ENCODE measurements at regions of chr2 and their contacts with region 1.

Region 1: GRCh38 chr2:96527286-96528005 is 9.1 kb upstream of the ARID5A start:
- DNase-seq: peak; percentile 59
- ATAC-seq: peak; percentile 58
- H3K4me3 Mint-ChIP-seq: peak overlapping the region; percentile 61
- H3K27ac Mint-ChIP-seq: no peak overlapping the region
- H3K4me1 Mint-ChIP-seq: peaks cover 26% of the 10 kb centered on the region
- H3K27me3 Mint-ChIP-seq: peaks cover 27% of the 10 kb centered on the region
- CTCF ChIP-seq: no peak

Region 2: DNA sequence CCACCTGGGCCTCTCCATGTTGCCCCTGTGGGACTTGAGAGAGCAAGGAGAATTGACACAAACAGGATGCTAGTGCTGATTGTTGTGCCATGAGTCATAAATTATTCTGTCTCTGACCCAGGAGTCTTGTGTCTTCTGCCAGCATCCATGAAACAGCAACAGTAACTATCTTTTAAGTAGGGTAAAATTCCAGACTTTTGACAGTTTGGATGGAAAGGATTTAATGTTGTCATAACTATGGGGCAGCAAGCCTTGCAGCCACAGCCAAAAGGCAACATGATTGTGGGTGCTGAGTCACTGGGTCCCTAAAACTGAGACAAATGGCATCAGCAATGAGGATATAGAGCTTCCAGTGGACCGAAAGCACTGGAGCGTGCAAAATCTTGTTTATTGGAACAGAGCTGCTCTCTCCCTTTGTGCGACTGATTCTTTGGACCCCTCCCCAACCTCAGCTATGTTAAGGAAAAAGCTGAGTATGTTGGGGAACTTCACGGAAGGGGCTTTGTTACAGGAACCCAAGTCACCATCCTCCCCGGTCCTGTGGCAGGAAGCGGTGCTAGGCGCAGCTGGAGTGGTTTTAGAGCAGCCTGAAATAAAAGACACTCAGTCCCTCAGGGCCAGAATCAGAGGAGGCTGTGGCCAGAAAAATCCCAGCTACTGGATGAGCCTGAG is 211.9 kb before region 1 on chr2:
- CTCF ChIA-PET with region 1: no interaction called
- POLR2A ChIA-PET with region 1: no interaction called
- DNase-seq: no peak
- ATAC-seq: no peak
- H3K4me3 Mint-ChIP-seq: no peak overlapping the region
- H3K27ac Mint-ChIP-seq: no peak overlapping the region
- H3K4me1 Mint-ChIP-seq: peaks cover 3% of the 10 kb centered on the region
- H3K27me3 Mint-ChIP-seq: peaks cover 19% of the 10 kb centered on the region
- CTCF ChIP-seq: no peak

Region 3: GRCh38 chr2:96407041-96407918 is 120.2 kb before region 1 on chr2:
- CTCF ChIA-PET with region 1: interaction called, 16 read pairs
- POLR2A ChIA-PET with region 1: no interaction called
- DNase-seq: peak; percentile 71
- ATAC-seq: peak; percentile 88
- H3K4me3 Mint-ChIP-seq: no peak overlapping the region
- H3K27ac Mint-ChIP-seq: no peak overlapping the region
- H3K4me1 Mint-ChIP-seq: peaks cover 30% of the 10 kb centered on the region
- H3K27me3 Mint-ChIP-seq: peaks cover 15% of the 10 kb centered on the region
- CTCF ChIP-seq: peak; percentile 82

Region 4: DNA sequence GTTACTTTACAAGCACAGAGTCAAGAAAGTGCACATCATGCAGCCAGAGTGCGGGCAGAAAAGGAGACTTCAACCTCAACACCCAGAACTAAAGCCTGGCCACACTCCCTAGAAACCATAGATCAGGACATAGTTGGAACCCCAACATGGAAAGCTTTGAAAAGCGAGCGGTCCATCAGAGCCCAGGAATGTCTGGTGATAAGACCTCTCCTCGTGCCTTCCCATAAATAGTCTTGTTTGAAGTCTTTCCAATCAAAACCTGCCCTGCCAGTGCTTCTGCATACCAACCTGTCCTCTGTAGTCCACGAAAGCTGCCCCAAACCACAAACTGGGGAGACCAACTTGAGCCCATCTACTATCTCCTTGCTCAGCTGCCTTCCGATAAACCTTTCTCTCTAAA is 77.8 kb before region 1 on chr2:
- CTCF ChIA-PET with region 1: no interaction called
- POLR2A ChIA-PET with region 1: no interaction called
- DNase-seq: no peak
- ATAC-seq: no peak
- H3K4me3 Mint-ChIP-seq: no peak overlapping the region
- H3K27ac Mint-ChIP-seq: no peak overlapping the region
- H3K4me1 Mint-ChIP-seq: no peaks in the 10 kb centered on the region
- H3K27me3 Mint-ChIP-seq: no peaks in the 10 kb centered on the region; the same call in 1 of the 2 replicates
- CTCF ChIP-seq: no peak

Region 5: DNA sequence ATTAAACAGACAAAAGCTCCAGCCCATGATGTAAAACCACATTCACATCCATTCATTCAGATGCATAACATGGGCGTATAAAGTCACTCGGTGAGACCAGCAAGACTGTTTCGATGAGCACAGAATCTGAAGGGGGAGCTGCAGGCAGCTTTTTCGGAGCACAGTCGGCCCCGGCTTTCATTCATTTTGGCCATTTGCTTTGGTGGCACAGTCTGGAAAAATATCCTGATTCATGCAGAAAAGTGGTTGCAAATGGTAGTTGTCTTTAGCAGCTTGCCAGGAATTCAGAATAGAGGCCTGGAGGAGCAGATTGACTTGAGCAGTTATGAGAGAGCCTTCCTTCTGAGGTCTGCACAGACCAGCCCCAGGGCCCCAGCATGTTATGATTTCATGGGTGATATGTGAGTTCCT is 20.3 kb after region 1 on chr2:
- CTCF ChIA-PET with region 1: interaction called, 84 read pairs
- POLR2A ChIA-PET with region 1: interaction called, 6 read pairs
- DNase-seq: no peak
- ATAC-seq: peak; percentile 56
- H3K4me3 Mint-ChIP-seq: peak overlapping the region; percentile 55
- H3K27ac Mint-ChIP-seq: peak overlapping the region; percentile 63
- H3K4me1 Mint-ChIP-seq: peaks cover 21% of the 10 kb centered on the region
- H3K27me3 Mint-ChIP-seq: no peaks in the 10 kb centered on the region; the same call in 1 of the 2 replicates
- CTCF ChIP-seq: no peak

Region 6: DNA sequence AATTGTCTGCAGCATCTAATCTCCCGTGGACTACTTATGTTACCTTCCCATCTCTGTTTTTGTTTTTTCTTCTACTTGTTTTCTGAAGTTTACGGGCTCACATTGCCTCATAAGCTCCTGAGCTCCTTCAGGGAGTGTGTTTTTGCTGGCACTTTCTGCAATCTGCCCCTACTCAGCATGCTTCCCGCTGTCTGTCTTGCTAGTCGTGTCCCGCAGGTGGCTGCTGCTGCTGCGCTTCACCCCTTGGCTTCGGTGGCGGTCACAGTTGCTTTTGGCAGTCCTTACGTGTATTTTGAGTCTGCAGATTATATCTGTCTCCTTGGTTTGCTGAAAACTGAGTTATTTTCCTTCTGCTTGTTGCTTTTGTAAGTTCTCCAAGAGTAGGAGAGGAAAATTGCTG is 152.4 kb after region 1 on chr2:
- CTCF ChIA-PET with region 1: no interaction called
- POLR2A ChIA-PET with region 1: no interaction called
- DNase-seq: no peak
- ATAC-seq: no peak
- H3K4me3 Mint-ChIP-seq: no peak overlapping the region
- H3K27ac Mint-ChIP-seq: peak overlapping the region; percentile 7; the same call in 1 of the 2 replicates
- H3K4me1 Mint-ChIP-seq: peaks cover 11% of the 10 kb centered on the region
- H3K27me3 Mint-ChIP-seq: no peaks in the 10 kb centered on the region
- CTCF ChIP-seq: no peak